Mammary epithelial cell (primary cell): ENCODE measurements at regions of chr6 and their contacts with region 1.

Region 1: GRCh38 chr6:12289933-12290820 is at the start of gene EDN1:
- DNase-seq: peak; percentile 84
- H3K4me3 ChIP-seq: peak within 1 kb of the TSS; percentile 54 to 96 (median 60)
- H3K27ac ChIP-seq: peak within 1 kb of the TSS; percentile 84
- H3K4me1 ChIP-seq: peaks cover 39% of the 10 kb centered on the region
- H3K27me3 ChIP-seq: no peaks in the 10 kb centered on the region
- CTCF ChIP-seq: peak; percentile 22 to 68
- total RNA-seq, gene EDN1: 8.9 to 11.3 TPM

Region 2: GRCh38 chr6:11585426-11586016 is 704.7 kb before region 1 on chr6:
- CTCF ChIA-PET with region 1: no interaction called
- dilution Hi-C with region 1: no loop called
- in situ Hi-C with region 1: no loop called
- intact Hi-C with region 1: loop called (anchors 1 kb)
- DNase-seq: peak; percentile 31
- H3K4me3 ChIP-seq: no peak overlapping the region
- H3K27ac ChIP-seq: no peak overlapping the region
- H3K4me1 ChIP-seq: no peaks in the 10 kb centered on the region
- H3K27me3 ChIP-seq: peaks cover 3% of the 10 kb centered on the region
- CTCF ChIP-seq: peak; percentile 64 to 66

Region 3: GRCh38 chr6:12011276-12012076 is 278.7 kb before region 1 on chr6:
- CTCF ChIA-PET with region 1: no interaction called
- dilution Hi-C with region 1: no loop called
- in situ Hi-C with region 1: no loop called
- intact Hi-C with region 1: loop called (anchors 1 kb)
- DNase-seq: peak; percentile 96
- H3K4me3 ChIP-seq: peak overlapping the region in 2 of 3 experiments; percentile 73 to 85
- H3K27ac ChIP-seq: peak overlapping the region; percentile 21
- H3K4me1 ChIP-seq: peaks cover 21% of the 10 kb centered on the region
- H3K27me3 ChIP-seq: no peaks in the 10 kb centered on the region
- CTCF ChIP-seq: no peak

Region 4: DNA sequence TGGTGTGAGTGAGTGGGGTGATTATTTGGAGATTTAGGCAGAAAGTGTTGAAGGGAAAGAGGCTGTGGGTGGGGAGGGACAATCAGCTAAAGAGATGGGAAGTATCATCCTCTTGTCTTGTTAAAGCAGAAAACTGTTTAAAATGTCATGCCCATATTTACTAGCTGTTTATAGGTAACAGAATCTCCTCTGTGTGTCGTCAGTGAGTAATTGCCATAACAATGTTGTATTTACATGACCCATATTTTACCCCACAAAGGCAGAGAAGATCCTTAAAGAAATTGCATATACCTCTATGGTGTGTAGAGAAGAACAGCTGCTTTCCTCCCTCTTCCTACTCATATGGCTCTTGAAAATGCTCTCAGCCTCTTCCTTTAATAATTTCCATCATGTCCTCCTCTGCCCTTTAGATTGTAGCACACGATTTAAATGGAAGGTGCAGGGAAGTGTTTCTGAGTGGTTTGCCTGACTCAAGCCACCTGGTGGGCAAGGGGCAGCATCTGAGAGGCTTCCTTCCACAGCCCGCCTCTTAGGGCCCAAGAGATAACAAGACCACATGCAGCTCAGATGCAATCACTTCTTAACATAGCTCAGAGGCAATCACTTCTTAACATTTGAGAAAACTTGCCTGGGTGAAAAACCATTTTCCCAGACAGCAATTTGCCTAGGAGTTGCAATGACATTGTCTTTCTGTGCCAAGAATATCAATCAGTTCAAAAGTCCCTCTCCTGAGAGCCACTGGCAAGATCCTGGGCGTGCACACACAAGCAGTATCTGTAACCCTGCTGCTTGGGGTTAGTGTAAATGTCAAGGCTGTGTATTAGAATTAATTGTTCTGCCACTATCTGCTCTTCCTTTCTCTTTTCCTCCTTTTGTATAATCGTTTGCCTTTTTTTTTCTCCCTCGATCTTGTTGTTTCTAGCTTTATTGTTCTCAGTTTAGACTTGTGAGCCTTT is 44.1 kb before region 1 on chr6:
- CTCF ChIA-PET with region 1: interaction called, 4 read pairs
- dilution Hi-C with region 1: no loop called
- in situ Hi-C with region 1: no loop called
- intact Hi-C with region 1: loop called (anchors 5 kb)
- DNase-seq: peak; percentile 38
- H3K4me3 ChIP-seq: no peak overlapping the region
- H3K27ac ChIP-seq: no peak overlapping the region
- H3K4me1 ChIP-seq: peaks cover 21% of the 10 kb centered on the region
- H3K27me3 ChIP-seq: no peaks in the 10 kb centered on the region
- CTCF ChIP-seq: no peak

Region 5: DNA sequence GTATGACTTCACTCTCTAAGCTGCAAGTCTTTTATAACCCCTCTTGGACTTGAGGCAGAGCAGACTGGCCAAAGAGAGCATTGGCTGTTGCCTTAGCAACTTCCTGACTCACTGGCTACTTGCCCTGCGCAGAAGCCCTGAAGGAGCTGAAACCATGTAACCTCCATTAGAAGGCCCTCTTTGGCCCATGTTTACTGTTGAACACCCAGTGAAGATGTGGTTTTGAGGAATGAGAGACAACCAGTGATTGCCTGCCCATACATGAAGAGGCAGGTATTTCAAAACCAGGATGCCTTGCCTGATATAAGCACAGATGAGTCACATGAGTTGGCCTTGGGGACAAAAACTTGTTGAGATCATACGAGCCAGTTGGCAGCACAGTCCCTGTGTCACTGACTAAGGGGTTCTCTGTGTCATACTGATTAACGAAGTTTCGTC is 182.4 kb after region 1 on chr6:
- CTCF ChIA-PET with region 1: no interaction called
- dilution Hi-C with region 1: no loop called
- in situ Hi-C with region 1: loop called in 1 of 2 experiments (anchors 10 kb)
- intact Hi-C with region 1: loop called (anchors 2 kb)
- DNase-seq: peak; percentile 100
- H3K4me3 ChIP-seq: no peak overlapping the region
- H3K27ac ChIP-seq: peak overlapping the region; percentile 91
- H3K4me1 ChIP-seq: peaks cover 36% of the 10 kb centered on the region
- H3K27me3 ChIP-seq: no peaks in the 10 kb centered on the region
- CTCF ChIP-seq: no peak

Region 6: DNA sequence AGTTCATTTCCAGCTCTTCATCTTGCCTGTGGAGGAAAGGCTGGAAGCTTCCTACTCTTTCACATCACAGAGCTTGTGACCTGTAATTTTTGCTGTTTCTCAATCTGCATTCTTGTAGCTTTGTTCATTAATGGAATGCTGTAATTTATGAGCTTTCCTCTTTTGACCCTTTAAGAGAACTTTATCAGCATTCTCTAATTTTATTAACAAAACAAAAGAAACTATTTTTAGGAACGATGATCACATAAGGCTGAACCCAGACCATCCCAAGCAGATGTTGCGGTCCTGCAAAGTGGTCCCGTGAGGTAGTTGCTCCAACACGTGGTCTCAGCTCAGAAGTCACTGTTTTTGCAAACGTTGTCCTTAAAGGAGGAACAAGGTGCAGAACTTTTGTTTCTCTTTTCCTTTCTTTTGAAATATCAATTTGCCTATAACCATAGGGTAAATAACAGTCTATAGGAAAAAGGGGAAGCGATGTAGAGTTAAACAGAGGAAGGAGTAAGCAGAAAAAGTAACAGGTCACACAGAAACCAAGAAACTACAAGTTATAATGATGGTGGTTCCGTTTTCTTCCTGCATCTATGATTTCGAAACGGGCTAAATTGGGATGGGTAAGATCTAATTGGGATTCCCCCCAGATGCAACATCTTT is 305.1 kb after region 1 on chr6:
- CTCF ChIA-PET with region 1: no interaction called
- dilution Hi-C with region 1: no loop called
- in situ Hi-C with region 1: loop called in 1 of 2 experiments (anchors 5 kb)
- intact Hi-C with region 1: no loop called
- DNase-seq: peak; percentile 44
- H3K4me3 ChIP-seq: no peak overlapping the region
- H3K27ac ChIP-seq: no peak overlapping the region
- H3K4me1 ChIP-seq: peaks cover 23% of the 10 kb centered on the region
- H3K27me3 ChIP-seq: no peaks in the 10 kb centered on the region
- CTCF ChIP-seq: no peak